ENCODE measurements at regions of chr17 and their contacts with region 1.

Region 1: GRCh38 chr17:27660426-27660825 is 29.4 kb downstream of the LGALS9 start:
- DNase-seq: no peak
- H3K4me3 ChIP-seq: no peak overlapping the region
- H3K27ac ChIP-seq: no peak overlapping the region
- H3K4me1 ChIP-seq: no peaks in the 10 kb centered on the region
- H3K27me3 ChIP-seq: peaks cover 38% of the 10 kb centered on the region
- CTCF ChIP-seq: no peak

Region 2: GRCh38 chr17:27868576-27868975 is 208.2 kb after region 1 on chr17:
- CTCF ChIA-PET with region 1: no interaction called
- POLR2A ChIA-PET with region 1: no interaction called
- intact Hi-C with region 1: loop called (anchors 5 kb)
- DNase-seq: no peak
- H3K4me3 ChIP-seq: no peak overlapping the region
- H3K27ac ChIP-seq: no peak overlapping the region
- H3K4me1 ChIP-seq: no peaks in the 10 kb centered on the region; the same call in 1 of the 2 replicates
- H3K27me3 ChIP-seq: 0 out of 2 replicates have a peak, but pooled peaks cover 6% of the 10 kb centered on the region
- CTCF ChIP-seq: no peak

Measured in PC-9 (cell line).